AG04449 (cell line): ENCODE measurements at regions of chr9 and their contacts with region 1.

Region 1: GRCh38 chr9:107137495-107138202 is 145.4 kb upstream of the RAD23B start:
- DNase-seq: no peak
- H3K4me3 ChIP-seq: no peak overlapping the region
- CTCF ChIP-seq: peak; percentile 53

Region 2: DNA sequence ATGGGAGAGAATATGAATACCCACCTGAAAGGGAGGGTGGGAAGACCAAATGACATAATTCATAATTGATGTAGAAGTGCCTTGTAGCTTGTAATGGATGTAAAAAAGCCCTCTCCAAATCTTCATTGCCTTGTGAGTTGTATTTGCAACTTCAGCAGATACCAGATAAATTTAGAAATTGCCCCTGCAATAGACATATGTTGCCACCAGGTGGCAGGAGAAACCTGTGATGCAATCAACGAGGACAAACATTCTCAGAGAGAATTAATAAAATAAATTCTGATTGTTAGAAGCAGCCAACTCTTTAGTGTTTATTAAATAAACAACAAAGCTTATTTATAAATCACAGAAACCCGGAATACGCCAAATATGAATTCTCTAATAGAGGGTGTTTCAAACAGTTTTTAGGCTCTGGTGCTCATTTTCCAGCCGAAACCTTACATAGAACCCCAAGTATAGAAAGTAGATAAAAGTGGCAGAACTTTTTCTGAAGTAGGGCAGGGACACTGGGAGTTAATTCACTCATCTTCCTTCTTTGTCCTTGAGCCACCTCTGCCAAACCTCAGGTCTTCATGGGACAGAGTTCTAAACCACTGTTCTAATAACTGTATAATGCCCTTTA is 1295.5 kb before region 1 on chr9:
- CTCF ChIA-PET with region 1: interaction called, 17 read pairs
- POLR2A ChIA-PET with region 1: no interaction called
- DNase-seq: peak; percentile 3
- H3K4me3 ChIP-seq: no peak overlapping the region
- CTCF ChIP-seq: peak; percentile 42

Region 3: DNA sequence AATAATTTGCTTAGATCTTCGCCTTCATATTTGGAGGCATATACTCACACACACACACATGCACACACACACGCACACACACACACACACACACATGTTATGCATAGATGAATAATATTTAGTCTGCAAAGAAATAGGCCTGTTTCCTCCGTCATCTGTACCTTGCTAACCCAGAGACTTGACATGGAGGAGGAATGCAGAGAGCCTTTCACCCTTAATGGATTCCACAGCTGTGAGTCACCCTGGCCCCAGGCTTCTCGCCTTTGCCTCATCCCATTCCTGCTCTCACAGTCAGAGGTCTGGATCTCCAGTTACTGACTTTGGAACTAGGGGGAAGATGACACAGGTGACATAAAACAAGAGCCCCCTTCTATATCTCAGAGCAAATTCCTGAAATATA is 245.0 kb before region 1 on chr9:
- CTCF ChIA-PET with region 1: no interaction called
- POLR2A ChIA-PET with region 1: no interaction called
- DNase-seq: peak; percentile 88
- H3K4me3 ChIP-seq: no peak overlapping the region
- CTCF ChIP-seq: no peak

Region 4: GRCh38 chr9:107020040-107020530 is 117.6 kb before region 1 on chr9:
- CTCF ChIA-PET with region 1: no interaction called
- POLR2A ChIA-PET with region 1: no interaction called
- DNase-seq: peak; percentile 87
- H3K4me3 ChIP-seq: no peak overlapping the region
- CTCF ChIP-seq: no peak

Region 5: DNA sequence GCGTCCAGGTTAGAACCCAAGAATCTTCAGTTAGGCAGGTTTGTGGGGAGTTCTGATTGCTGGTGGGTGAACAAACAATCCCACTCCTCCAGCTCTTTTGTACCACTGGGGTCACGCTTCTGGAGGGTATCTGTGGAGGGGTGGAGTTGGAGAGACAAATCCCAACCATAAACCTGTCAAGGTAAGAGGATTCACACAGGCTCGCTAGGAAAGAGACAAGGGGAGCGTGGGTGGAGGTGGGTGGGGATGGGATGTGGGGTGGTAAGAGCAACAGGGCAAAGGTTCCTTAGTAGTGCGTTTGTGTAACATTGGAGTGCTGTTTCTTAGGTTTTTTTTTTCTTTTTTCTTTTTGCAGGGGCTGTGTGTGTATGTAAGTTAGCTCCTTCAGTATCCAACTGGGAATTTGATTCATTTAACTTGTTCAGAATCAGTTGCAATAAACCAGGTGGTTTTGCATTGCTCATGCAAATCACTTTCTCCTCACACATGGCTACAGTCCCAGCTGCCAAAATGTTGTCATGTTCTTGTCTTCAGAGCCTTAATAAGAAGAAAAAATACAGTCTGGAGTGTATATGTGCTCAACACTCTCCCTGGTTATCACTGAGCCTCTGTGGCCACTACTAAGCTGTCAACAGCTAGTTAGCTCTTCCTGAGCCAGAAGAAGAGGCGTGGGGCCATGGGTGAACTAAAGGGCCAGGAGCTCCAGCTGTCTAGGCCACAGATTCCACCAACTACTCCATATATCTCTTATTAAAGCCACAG is 18.6 kb before region 1 on chr9:
- CTCF ChIA-PET with region 1: interaction called, 27 read pairs
- POLR2A ChIA-PET with region 1: no interaction called
- DNase-seq: no peak
- H3K4me3 ChIP-seq: no peak overlapping the region
- CTCF ChIP-seq: no peak

Region 6: GRCh38 chr9:107127602-107128001 is 10.0 kb before region 1 on chr9:
- CTCF ChIA-PET with region 1: interaction called, 27 read pairs
- POLR2A ChIA-PET with region 1: no interaction called
- DNase-seq: no peak
- H3K4me3 ChIP-seq: no peak overlapping the region
- CTCF ChIP-seq: no peak

Region 7: GRCh38 chr9:107158321-107158720 is 20.7 kb after region 1 on chr9:
- CTCF ChIA-PET with region 1: interaction called, 43 read pairs
- POLR2A ChIA-PET with region 1: no interaction called
- DNase-seq: no peak
- H3K4me3 ChIP-seq: no peak overlapping the region
- CTCF ChIP-seq: peak; percentile 57

Region 8: GRCh38 chr9:107172160-107172978 is 34.7 kb after region 1 on chr9:
- CTCF ChIA-PET with region 1: interaction called, 25 read pairs
- POLR2A ChIA-PET with region 1: no interaction called
- DNase-seq: peak; percentile 17
- H3K4me3 ChIP-seq: no peak overlapping the region
- CTCF ChIP-seq: peak; percentile 76

Region 9: GRCh38 chr9:107340920-107341632 is 203.4 kb after region 1 on chr9:
- CTCF ChIA-PET with region 1: interaction called, 29 read pairs
- POLR2A ChIA-PET with region 1: no interaction called
- DNase-seq: no peak
- H3K4me3 ChIP-seq: no peak overlapping the region
- CTCF ChIP-seq: peak; percentile 96

Region 10: DNA sequence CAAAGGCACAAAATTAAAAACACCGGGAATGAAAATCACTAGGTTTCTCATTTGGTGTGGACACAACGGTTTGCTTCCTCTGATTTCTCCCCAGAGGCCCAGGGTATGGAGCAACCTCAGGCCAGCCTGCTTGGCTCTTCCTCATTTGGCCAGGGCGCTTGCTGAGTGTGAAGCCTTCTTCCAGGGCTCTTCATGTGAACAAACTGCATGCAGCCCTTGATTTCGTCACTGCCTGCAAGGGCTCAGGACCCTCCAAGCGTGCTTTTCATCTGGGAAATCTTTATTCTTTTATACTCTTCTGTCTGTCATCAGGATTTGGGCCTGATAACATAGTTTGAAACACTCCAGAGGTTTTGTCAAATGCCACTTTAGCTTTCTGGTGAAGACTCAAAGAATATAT is 474.5 kb after region 1 on chr9:
- CTCF ChIA-PET with region 1: no interaction called
- POLR2A ChIA-PET with region 1: no interaction called
- DNase-seq: no peak
- H3K4me3 ChIP-seq: no peak overlapping the region
- CTCF ChIP-seq: no peak